Heart right ventricle (tissue), 16 donors: ENCODE measurements at regions of chr15 and their contacts with region 1.

Region 1: DNA sequence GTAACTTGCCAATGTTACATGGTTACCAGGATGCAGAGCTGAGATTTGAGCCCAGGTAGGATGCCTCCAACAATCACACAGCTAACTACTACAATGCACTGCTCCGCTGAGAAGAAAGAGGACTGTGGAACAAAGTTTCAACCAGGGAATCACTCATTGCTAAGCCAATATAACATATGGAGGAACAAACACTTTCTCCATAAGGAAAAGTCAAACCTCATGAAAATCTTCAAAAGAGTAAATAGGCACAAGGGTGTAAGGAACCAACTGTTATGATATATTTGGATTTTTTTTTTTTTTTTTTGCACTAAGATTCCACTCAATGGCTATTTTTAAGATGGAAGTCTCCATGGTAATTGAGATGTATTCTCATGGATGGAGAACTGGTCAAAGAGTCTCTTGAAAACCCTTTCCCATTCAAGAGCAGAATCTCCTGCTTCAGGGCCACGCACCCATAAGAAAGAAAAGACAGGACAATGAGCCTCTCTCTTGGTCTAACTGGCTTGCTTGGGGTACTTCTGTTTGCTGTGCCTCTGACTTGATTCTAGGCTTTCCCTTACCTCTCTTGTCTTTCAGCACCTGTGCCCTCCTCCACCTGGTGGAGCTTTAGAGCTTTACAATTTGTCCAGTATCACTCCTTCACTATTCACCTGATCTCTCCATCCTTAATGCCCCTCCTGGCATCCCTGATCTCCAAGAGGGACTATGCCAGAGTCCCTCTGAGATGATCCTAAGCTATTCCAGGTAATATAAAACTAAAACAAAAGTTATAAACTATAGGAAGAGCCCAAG is 252.8 kb downstream of the NTRK3 start:
- DNase-seq: no peak
- ATAC-seq: no peak
- H3K4me3 ChIP-seq: no peak overlapping the region
- H3K27ac ChIP-seq: no peak overlapping the region
- H3K4me1 ChIP-seq: no peaks in the 10 kb centered on the region
- H3K27me3 ChIP-seq: no peaks in the 10 kb centered on the region
- CTCF ChIP-seq: no peak

Region 2: GRCh38 chr15:87369269-87369668 is 634.5 kb before region 1 on chr15:
- intact Hi-C with region 1: no loop called
- DNase-seq: no peak
- ATAC-seq: no peak
- H3K4me3 ChIP-seq: no peak overlapping the region
- H3K27ac ChIP-seq: no peak overlapping the region
- H3K4me1 ChIP-seq: no peaks in the 10 kb centered on the region
- H3K27me3 ChIP-seq: no peaks in the 10 kb centered on the region
- CTCF ChIP-seq: no peak

Region 3: DNA sequence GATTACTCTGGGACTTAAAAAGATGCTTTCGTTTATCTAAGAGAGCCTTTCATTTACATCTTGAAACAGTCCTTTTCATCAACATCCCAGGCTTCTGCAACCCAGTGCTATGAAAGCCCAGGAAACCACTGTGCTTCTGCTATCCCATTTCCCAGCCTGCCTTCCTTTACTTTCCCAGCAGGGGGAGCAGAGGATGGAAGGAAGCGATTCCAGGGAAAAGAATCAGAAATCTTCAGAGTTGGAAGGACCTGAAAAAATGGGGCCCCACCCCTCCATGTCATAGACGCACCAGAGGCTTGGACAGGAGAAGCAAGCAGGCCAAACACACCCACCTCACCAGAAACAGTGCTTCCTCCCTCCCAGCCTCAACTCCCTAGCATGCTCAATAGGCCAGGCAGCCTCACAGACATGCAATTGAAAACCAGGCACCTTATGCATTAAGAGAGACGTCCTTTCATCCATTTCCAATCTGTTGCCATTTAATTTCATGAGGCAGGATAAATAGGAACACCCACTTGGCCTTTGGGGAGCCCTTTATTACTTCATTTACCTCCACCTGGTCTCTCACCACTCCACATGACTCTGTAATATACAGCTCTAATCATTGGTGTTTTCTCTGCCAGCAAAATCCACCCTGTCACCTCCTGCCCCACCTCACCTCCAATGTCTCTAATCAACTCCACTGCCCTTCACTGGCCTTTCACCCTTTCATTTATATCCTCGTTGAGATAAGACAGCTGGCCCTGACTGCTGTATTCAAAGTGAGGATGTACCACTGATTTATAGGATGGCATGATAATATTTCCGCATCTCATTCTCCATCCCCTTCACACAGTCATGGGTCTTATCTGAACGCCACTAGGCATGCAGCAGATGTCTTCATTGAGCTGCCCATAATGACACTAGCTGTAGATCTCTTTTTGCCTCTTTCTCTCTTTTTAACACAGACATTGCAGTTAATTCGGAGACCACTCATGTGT is 331.1 kb before region 1 on chr15:
- intact Hi-C with region 1: loop called in 1 of 10 experiments (anchors 10 kb)
- DNase-seq: peak in 1 of 2 donors; percentile 23
- ATAC-seq: peak in 2 of 8 donors; percentile 41 to 49
- H3K4me3 ChIP-seq: no peak overlapping the region
- H3K27ac ChIP-seq: no peak overlapping the region
- H3K4me1 ChIP-seq: peaks cover 0 to 7% (median 0%) of the 10 kb centered on the region in 9 donors
- H3K27me3 ChIP-seq: no peaks in the 10 kb centered on the region
- CTCF ChIP-seq: peak in 8 of 9 donors; percentile 30 to 69 (median 62)

Region 4: DNA sequence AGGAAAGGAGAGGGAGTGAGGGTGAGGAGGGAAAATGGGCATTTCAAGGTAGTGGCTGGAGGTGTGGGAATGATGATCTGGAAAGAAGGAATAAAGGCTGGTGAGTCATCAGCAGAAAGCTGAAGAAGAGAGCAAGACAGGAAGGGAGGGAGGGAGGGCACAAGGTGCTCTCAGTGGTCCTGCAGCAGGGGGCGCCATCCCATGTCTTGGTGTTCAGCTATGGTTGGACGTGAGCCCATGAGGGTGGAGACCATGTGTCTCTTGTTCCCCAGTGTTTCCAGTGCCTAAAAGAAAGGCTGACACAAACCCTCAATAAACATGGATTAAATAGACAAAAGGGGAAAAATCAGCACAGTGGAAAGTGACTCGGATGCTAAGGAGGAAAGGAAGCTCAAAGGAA is 24.3 kb after region 1 on chr15:
- intact Hi-C with region 1: no loop called
- DNase-seq: no peak
- ATAC-seq: no peak
- H3K4me3 ChIP-seq: no peak overlapping the region
- H3K27ac ChIP-seq: no peak overlapping the region
- H3K4me1 ChIP-seq: no peaks in the 10 kb centered on the region
- H3K27me3 ChIP-seq: peaks cover 0 to 4% (median 0%) of the 10 kb centered on the region in 7 donors
- CTCF ChIP-seq: peak in 1 of 9 donors; percentile 6

Region 5: GRCh38 chr15:88243895-88244787 is 240.4 kb after region 1 on chr15:
- intact Hi-C with region 1: no loop called
- DNase-seq: no peak
- ATAC-seq: no peak
- H3K4me3 ChIP-seq: no peak overlapping the region
- H3K27ac ChIP-seq: no peak overlapping the region
- H3K4me1 ChIP-seq: peaks cover 0 to 19% (median 8%) of the 10 kb centered on the region in 9 donors
- H3K27me3 ChIP-seq: peaks cover 0 to 16% (median 0%) of the 10 kb centered on the region in 7 donors
- CTCF ChIP-seq: peak; percentile 31 to 59 (median 54)